ENCODE measurements at regions of chr22 and their contacts with region 1.

Region 1: GRCh38 chr22:24768537-24769374 is 5.8 kb downstream of the PIWIL3 start:
- DNase-seq: peak; percentile 27
- H3K4me3 ChIP-seq: no peak overlapping the region
- H3K27ac ChIP-seq: no peak overlapping the region
- H3K4me1 ChIP-seq: no peaks in the 10 kb centered on the region
- H3K27me3 ChIP-seq: peaks cover 37% of the 10 kb centered on the region
- CTCF ChIP-seq: peak; percentile 76

Region 2: GRCh38 chr22:24845041-24845898 is 76.5 kb after region 1 on chr22:
- intact Hi-C with region 1: loop called (anchors 5 kb)
- DNase-seq: no peak
- H3K4me3 ChIP-seq: no peak overlapping the region
- H3K27ac ChIP-seq: no peak overlapping the region
- H3K4me1 ChIP-seq: peaks cover 6% of the 10 kb centered on the region
- H3K27me3 ChIP-seq: no peaks in the 10 kb centered on the region
- CTCF ChIP-seq: no peak

Measured in left ventricle myocardium inferior (tissue), 1 donor.